ENCODE measurements at regions of chrX and their contacts with region 1.

Region 1: DNA sequence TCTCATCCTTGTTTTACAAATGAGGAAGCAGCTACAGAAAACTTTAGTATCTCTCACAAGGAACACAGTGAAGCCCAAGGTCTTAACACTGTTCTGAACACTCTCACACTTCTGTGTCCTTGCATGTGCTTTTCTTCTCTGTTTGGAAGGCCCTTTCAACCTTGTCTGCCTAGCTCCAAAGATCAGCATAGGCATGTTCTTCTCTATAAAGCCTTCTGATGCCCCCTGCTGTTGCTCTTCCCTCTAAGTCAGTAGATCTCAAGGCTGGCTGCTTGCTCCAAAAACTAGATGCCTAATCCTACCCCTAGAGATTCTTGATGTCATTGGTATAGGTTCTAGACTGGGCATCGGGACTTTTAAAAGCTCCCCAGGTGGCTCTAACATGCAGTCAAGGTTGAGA is 5.9 kb downstream of the APOO start:
- DNase-seq: no peak
- H3K4me3 ChIP-seq: no peak overlapping the region
- CTCF ChIP-seq: peak; percentile 45

Region 2: DNA sequence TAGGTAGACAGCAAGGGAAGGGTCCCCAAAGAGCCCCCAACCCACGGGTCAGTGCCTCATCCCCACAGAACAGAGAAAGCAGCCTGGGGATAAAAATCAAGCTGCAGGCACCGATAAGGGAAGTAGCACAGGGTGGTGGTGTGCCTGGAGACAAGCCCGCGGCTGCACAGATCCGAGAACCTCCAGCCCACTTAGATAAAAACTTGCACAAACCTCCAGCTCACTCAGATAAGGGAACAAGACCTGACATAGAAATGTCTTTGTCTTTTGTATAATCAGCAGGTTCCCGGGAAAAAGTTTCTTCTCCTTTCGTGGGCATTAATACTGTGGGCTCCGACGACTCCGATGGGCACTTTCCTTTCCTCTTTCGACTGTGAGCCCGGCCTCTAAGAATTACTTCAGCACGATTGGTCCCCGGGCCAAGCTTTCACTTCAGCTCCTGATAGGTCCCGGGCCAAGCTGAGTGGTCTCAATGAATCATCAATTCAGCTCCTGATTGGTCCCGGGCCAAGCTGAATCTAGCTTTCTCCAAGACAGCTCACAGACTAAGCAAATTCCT is 202.1 kb before region 1 on chrX:
- CTCF ChIA-PET with region 1: interaction called, 189 read pairs
- POLR2A ChIA-PET with region 1: no interaction called
- DNase-seq: no peak
- H3K4me3 ChIP-seq: no peak overlapping the region
- CTCF ChIP-seq: no peak

Region 3: DNA sequence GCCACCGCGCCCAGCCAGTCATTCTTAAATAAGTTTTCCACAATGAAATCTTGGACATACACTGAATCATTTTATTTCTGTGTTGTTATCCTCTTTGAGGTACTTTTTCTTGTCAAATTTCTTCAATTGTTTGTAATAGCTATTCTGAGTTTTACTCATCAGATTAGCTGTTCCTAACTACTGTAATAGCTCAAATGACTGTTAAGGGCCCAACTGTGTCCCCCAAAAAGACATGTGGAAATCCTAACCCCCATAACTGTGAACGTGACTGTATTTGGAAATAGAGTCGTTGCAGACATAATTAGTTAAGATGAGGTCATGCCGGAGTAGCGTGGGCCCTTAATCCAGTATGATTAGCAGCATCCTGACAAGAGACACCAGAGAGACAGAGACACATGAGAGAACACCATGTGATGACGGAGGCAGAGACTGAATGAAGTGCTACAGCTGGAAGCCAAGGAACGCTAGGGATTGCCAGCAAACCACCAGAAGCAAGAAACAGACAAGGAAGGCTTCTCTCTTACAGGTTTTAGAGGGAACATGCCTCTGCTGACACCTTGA is 181.6 kb before region 1 on chrX:
- CTCF ChIA-PET with region 1: interaction called, 25 read pairs
- POLR2A ChIA-PET with region 1: no interaction called
- DNase-seq: no peak
- H3K4me3 ChIP-seq: no peak overlapping the region
- CTCF ChIP-seq: no peak

Region 4: GRCh38 chrX:23737413-23737812 is 164.4 kb before region 1 on chrX:
- CTCF ChIA-PET with region 1: interaction called, 30 read pairs
- POLR2A ChIA-PET with region 1: interaction called, 9 read pairs
- DNase-seq: no peak
- H3K4me3 ChIP-seq: no peak overlapping the region
- CTCF ChIP-seq: no peak

Region 5: DNA sequence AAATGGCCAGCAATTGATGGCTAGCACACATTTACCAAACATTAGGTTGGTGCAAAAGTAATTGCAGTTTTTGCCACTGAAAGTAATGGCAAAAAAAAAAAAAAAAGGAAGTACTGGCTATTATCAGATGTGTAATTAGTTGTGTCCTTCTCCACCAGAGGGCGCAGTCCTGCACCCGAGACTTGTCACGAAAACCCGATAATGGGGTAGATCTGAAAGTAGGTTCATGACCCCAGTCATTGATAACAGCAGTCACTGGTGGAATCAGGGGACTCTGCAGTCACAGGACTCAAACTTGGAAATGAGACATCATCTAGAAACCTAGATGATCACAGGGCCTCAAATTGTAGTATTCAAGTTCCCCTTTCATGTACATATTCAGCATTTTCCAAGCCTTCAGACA is 145.6 kb before region 1 on chrX:
- CTCF ChIA-PET with region 1: interaction called, 49 read pairs
- POLR2A ChIA-PET with region 1: no interaction called
- DNase-seq: no peak
- H3K4me3 ChIP-seq: no peak overlapping the region
- CTCF ChIP-seq: peak; percentile 34

Region 6: DNA sequence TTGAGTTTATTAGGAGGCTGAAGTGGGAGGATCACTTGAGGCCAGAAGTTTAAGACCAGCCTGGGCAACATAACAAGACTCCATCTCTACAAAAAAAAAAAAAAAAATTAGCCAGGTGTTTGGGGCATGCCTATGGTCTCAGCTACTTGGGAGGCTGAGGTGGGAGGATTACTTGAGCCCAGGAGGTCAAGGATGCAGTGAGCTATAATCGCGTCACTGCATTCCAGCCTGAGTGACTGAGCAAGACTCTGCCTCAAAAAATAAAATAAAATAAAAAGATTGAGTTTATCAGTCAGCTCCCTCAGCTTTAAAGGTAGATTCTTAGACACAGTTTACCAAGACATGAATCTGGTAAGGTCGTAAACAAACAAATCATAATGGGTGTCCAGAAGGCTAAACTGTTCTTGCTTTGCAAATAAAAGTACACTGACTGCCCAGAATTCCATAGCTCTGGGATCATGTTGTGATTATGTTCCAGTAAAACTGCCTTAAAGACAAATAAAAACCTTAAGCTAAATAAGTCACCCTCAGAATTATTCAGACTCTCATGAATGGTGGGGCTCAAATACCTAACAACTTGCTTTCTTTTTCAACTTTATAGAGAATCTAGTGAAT is 12.8 kb before region 1 on chrX:
- CTCF ChIA-PET with region 1: interaction called, 14 read pairs
- POLR2A ChIA-PET with region 1: no interaction called
- DNase-seq: no peak
- H3K4me3 ChIP-seq: no peak overlapping the region
- CTCF ChIP-seq: no peak

Region 7: DNA sequence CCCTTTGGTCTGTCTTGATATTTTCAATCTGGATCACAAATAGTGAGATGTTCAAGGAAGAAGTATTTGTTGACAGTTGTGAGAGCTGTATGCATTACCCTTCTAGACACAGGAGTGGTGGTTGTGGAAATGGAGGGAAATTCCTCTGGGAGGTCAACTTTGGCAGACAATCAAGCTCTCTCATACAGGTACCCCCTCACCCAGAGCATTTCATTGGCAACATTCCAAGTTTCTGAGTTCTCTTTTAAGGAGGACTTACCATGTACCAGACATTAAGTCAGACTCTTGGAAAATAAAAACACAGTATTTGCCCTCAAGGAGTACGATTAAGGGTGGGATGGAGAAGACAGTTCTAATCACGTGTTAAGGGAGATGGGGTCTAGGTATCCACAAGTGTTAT is 79.9 kb after region 1 on chrX:
- CTCF ChIA-PET with region 1: no interaction called
- POLR2A ChIA-PET with region 1: no interaction called
- DNase-seq: no peak
- H3K4me3 ChIP-seq: no peak overlapping the region
- CTCF ChIP-seq: no peak

Measured in AG04449 (cell line).